ENCODE measurements at regions of chr2 and their contacts with region 1.

Region 1: GRCh38 chr2:159968279-159968900 is 94.0 kb downstream of the PLA2R1 start:
- DNase-seq: peak; percentile 35
- ATAC-seq: peak; percentile 89
- H3K4me3 ChIP-seq: no peak overlapping the region
- H3K27ac ChIP-seq: no peak overlapping the region
- H3K4me1 ChIP-seq: no peaks in the 10 kb centered on the region
- H3K27me3 ChIP-seq: no peaks in the 10 kb centered on the region
- CTCF ChIP-seq: peak; percentile 59 to 67 (median 64)
- POLR2A ChIP-seq: no peak
- RAD21 ChIP-seq: peak; percentile 89

Region 2: GRCh38 chr2:159035790-159036411 is 932.5 kb before region 1 on chr2:
- CTCF ChIA-PET with region 1: no interaction called
- POLR2A ChIA-PET with region 1: no interaction called
- RAD21 ChIA-PET with region 1: no interaction called
- intact Hi-C with region 1: loop called (anchors 5 kb)
- DNase-seq: peak; percentile 62
- ATAC-seq: peak; percentile 99
- H3K4me3 ChIP-seq: no peak overlapping the region
- H3K27ac ChIP-seq: no peak overlapping the region
- H3K4me1 ChIP-seq: peaks cover 15 to 16% of the 10 kb centered on the region in 2 experiments
- H3K27me3 ChIP-seq: no peaks in the 10 kb centered on the region
- CTCF ChIP-seq: peak; percentile 56 to 65 (median 57)
- POLR2A ChIP-seq: no peak
- RAD21 ChIP-seq: peak; percentile 89

Region 3: DNA sequence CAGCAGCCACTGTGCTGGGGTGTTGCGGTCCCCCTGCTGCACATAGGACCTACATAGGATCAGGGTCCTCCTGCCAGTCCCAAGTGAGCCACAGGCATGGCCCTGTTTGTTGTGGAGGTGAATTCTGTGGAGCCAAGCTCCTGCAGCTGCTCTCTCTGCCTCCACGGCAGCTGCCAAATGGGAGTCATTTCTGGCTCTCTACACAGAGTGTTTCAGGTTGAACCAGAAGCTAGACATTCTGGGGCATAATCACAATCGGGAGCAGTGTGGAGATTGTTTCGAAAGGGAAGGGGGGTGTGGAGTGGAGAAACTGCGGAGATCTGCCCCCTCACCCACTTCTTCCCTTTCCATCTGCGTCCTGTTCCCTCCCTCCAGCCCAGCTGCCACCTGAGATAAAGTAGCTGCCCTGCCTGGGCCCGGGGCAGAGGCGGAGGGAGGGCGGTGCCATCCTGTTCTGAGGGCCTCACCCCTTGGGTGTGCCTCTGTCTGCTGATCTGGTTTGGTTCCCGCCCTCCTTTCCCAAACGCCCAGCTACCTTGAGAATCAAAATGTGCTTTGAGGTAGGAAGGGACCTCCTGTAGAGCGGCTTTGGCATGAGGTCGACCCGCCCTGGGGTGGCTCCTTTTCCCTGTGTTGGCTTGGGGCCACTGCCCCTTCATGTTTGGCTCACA is 821.3 kb before region 1 on chr2:
- CTCF ChIA-PET with region 1: no interaction called
- POLR2A ChIA-PET with region 1: no interaction called
- RAD21 ChIA-PET with region 1: no interaction called
- intact Hi-C with region 1: loop called (anchors 10 kb)
- DNase-seq: peak; percentile 23
- ATAC-seq: peak; percentile 99
- H3K4me3 ChIP-seq: peak overlapping the region in 1 of 2 experiments; percentile 19; a peak in 1 of 4 replicates
- H3K27ac ChIP-seq: no peak overlapping the region; the same call in 1 of the 2 replicates
- H3K4me1 ChIP-seq: peaks cover 25 to 31% of the 10 kb centered on the region in 2 experiments
- H3K27me3 ChIP-seq: no peaks in the 10 kb centered on the region
- CTCF ChIP-seq: no peak
- POLR2A ChIP-seq: no peak
- RAD21 ChIP-seq: no peak

Region 4: GRCh38 chr2:159557451-159558034 is 410.8 kb before region 1 on chr2:
- CTCF ChIA-PET with region 1: interaction called, 3 read pairs
- POLR2A ChIA-PET with region 1: no interaction called
- RAD21 ChIA-PET with region 1: no interaction called
- intact Hi-C with region 1: loop called (anchors 10 kb)
- DNase-seq: peak; percentile 16
- ATAC-seq: peak; percentile 68; the same call in 1 of the 2 replicates
- H3K4me3 ChIP-seq: no peak overlapping the region
- H3K27ac ChIP-seq: no peak overlapping the region
- H3K4me1 ChIP-seq: no peaks in the 10 kb centered on the region
- H3K27me3 ChIP-seq: no peaks in the 10 kb centered on the region
- CTCF ChIP-seq: peak; percentile 53 to 64 (median 59); a peak in 5 of 6 replicates
- POLR2A ChIP-seq: no peak
- RAD21 ChIP-seq: peak; percentile 80

Region 5: GRCh38 chr2:160402997-160403979 is 434.9 kb after region 1 on chr2:
- CTCF ChIA-PET with region 1: no interaction called
- POLR2A ChIA-PET with region 1: no interaction called
- RAD21 ChIA-PET with region 1: no interaction called
- intact Hi-C with region 1: no loop called
- DNase-seq: peak; percentile 19
- ATAC-seq: peak; percentile 37
- H3K4me3 ChIP-seq: peak overlapping the region in 1 of 2 experiments; percentile 18; a peak in 1 of 4 replicates
- H3K27ac ChIP-seq: peak overlapping the region; percentile 8; the same call in 1 of the 2 replicates
- H3K4me1 ChIP-seq: peaks cover 13 to 35% of the 10 kb centered on the region in 2 experiments
- H3K27me3 ChIP-seq: no peaks in the 10 kb centered on the region
- CTCF ChIP-seq: no peak
- POLR2A ChIP-seq: no peak
- RAD21 ChIP-seq: no peak